Activated T-helper 1 cell treated with anti-CD3 and anti-CD28 coated beads, Interleukin-12 subunit alpha, Interleukin-12 subunit beta, Interleukin-2, Interleukin-4 antibody, amounts not matched to agents 30 ng/mL and 10 ng/mL and 1 ng/mL, durations not matched to agents 14 hours and 24 hours and 36 hours (primary cell): ENCODE measurements at regions of chr18 and their contacts with region 1.

Region 1: GRCh38 chr18:21242141-21242779 is at the start of gene GREB1L:
- DNase-seq: no peak
- H3K4me3 Mint-ChIP-seq: no peak within 1 kb of the TSS
- H3K27ac Mint-ChIP-seq: no peak within 1 kb of the TSS
- H3K4me1 Mint-ChIP-seq: no peaks in the 10 kb centered on the region
- H3K27me3 Mint-ChIP-seq: peaks cover 59% of the 10 kb centered on the region
- total RNA-seq, gene GREB1L: not detected in 2 replicates

Region 2: DNA sequence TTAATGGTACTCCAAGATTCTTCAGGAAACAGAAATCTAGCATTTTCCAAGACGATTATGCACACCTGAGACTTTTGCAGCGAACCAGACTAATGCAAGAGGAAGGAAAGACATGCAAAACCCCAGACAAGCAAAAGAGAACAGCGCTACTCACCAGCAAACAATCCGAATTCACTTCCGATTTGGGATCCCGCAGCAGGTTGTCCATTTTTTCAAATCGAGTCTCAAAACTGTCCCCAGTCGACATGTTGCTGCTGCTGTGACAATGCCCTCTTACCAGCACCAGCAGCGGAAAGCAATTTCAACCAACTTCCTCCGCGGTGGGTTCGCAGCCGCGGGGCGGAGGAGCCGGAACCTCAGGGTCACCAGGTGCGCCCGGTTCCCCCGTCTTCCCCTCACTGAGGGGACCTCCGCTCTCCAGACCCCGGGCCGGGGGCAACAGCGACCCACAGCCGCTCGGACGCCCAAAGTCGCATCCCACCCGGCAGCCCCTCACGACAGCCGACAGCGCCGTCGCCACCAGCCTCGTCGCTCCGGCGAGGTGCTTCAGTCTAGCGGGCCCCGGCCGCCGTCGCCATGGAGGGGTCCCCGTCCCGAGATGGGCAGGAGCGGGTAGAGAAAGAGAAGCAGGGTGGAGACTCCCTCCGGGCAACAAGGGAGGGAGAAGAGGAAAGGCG is 131.5 kb before region 1 on chr18:
- intact Hi-C with region 1: no loop called
- DNase-seq: peak; percentile 65
- H3K4me3 Mint-ChIP-seq: no peak overlapping the region
- H3K27ac Mint-ChIP-seq: peak overlapping the region; percentile 97
- H3K4me1 Mint-ChIP-seq: peaks cover 7% of the 10 kb centered on the region
- H3K27me3 Mint-ChIP-seq: peaks cover 5% of the 10 kb centered on the region

Region 3: DNA sequence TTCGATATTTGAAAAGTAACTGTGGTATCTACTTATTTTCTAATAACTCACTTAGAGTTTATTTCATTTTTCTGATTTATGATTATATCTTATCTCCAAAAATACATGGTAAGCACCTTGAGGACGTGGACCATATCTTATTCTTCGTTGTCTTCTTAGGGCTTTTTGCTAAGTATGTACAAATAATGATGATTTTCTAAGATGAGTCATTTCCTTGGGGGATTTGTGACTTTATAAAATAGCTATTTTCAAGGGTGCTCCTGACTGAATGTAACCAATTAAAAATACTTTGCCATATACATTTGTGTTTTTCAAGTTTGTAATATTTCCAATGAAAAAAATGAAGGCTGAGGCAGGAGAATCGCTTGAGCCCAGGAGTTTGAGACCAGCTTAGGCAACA is 56.1 kb after region 1 on chr18:
- intact Hi-C with region 1: loop called (anchors 10 kb)
- DNase-seq: no peak
- H3K4me3 Mint-ChIP-seq: no peak overlapping the region
- H3K27ac Mint-ChIP-seq: no peak overlapping the region
- H3K4me1 Mint-ChIP-seq: no peaks in the 10 kb centered on the region
- H3K27me3 Mint-ChIP-seq: peaks cover 2% of the 10 kb centered on the region